A673 (cell line): ENCODE measurements at regions of chr13 and their contacts with region 1.

Region 1: DNA sequence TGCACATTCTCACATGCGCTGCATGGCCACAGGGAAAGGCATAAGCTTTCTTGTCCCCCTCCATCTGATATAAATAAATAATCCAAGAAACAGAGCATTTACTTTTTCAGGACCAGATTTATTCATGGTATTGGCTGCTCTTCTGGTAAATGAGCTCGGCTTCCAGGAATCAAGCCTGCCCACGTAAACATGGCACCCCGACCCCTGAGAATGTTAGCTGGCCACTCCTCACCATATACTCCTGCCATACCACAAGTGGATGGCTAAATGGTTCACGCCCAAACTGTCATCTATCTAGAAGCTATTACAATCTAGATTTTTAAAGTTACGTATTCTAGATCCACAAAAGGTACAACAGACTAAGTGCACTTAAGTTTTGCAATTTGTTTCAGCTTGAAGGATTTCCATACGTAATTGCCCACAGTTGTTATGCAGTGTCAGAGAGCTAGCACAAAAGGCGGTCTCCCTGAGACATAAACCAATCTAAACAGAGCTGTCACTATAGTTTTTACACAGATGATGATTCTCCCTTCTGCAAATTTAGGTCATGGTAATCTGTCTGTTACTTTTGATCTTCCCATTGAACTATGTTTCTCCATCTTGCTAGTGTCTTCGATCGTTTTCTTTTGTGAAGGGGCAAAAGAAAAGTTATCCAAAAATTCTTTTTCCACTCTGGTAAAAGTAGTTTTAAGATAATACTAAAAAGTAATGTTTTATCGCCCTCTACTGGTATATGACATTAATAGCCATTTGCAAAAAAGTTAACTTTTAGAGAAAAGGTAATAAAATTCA is 16.2 kb upstream of the FOXO1 start:
- DNase-seq: peak; percentile 69
- H3K4me3 ChIP-seq: no peak overlapping the region
- H3K27ac ChIP-seq: no peak overlapping the region
- H3K4me1 ChIP-seq: no peaks in the 10 kb centered on the region
- H3K27me3 ChIP-seq: no peaks in the 10 kb centered on the region
- CTCF ChIP-seq: peak; percentile 64

Region 2: DNA sequence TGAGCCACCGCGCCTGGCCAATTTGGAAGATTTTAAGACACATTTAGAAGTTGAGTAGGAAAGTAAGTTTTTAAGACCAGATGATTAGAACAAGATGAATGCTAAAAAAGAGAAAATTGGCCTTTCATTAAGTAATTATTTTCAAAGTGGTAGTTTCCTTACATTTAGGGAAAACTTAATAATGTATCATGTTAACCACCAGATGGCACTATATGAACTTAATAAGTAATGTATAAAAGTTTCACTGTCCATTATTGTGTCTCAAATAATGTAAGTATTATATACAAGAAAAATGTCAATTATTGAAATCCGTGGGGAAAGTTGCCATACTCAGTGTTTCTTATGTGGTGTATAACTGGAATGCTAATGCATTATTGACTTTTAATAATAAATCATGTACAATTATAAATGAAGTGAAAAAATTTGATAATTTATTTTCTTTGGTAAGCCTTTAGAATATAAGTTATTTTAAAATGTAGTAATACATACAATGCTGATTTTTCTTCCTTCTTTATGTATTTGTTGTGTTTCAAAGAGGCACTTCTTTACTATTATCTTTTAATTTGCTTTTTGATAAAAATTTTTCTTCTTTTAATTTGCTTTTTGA is 998.0 kb before region 1 on chr13:
- CTCF ChIA-PET with region 1: no interaction called
- POLR2A ChIA-PET with region 1: interaction called, 5 read pairs
- intact Hi-C with region 1: loop called (anchors 2 kb)
- DNase-seq: peak; percentile 73
- H3K4me3 ChIP-seq: no peak overlapping the region
- H3K27ac ChIP-seq: no peak overlapping the region
- H3K4me1 ChIP-seq: no peaks in the 10 kb centered on the region
- H3K27me3 ChIP-seq: no peaks in the 10 kb centered on the region
- CTCF ChIP-seq: peak; percentile 56

Region 3: GRCh38 chr13:39777527-39778061 is 905.1 kb before region 1 on chr13:
- CTCF ChIA-PET with region 1: no interaction called
- POLR2A ChIA-PET with region 1: no interaction called
- intact Hi-C with region 1: loop called (anchors 5 kb)
- DNase-seq: peak; percentile 68
- H3K4me3 ChIP-seq: no peak overlapping the region
- H3K27ac ChIP-seq: no peak overlapping the region
- H3K4me1 ChIP-seq: no peaks in the 10 kb centered on the region
- H3K27me3 ChIP-seq: no peaks in the 10 kb centered on the region
- CTCF ChIP-seq: peak; percentile 59

Region 4: DNA sequence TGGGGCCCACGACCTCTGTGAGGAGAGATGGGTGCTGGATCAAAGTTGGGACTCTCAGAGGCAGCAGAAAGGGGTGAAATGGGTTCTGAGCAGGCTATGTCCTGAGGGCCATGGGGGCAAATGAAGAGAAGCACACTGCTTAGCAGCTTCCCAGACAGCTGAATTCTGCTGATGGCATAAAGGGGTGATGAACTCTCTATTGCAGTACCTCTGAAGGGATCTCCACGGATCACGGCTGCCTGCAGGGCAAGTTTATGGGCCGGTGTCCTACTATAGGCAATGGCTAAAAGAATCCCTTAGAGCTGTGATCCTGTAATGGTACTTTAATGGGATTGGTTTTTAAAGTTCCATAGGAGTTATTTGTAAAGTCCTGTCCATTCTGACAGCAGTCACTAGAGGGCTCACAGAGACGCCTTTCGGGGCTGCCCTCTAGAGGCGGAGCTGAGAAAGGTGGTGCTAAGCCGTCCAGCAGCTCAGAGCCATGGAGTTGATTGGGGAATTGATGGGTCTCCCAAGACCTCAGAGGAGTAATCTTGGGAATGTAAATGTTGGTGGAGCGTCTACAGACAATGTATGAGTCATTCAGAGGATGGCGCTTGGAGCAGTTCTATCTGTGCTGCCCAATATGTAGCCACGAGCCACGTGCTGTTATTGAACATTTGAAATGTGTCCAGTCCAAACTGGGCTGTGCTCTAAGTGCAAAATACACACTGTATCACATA is 739.9 kb before region 1 on chr13:
- CTCF ChIA-PET with region 1: interaction called, 4 read pairs
- POLR2A ChIA-PET with region 1: no interaction called
- intact Hi-C with region 1: loop called (anchors 2 kb)
- DNase-seq: peak; percentile 90
- H3K4me3 ChIP-seq: no peak overlapping the region
- H3K27ac ChIP-seq: no peak overlapping the region
- H3K4me1 ChIP-seq: peaks cover 4% of the 10 kb centered on the region
- H3K27me3 ChIP-seq: no peaks in the 10 kb centered on the region
- CTCF ChIP-seq: peak; percentile 100

Region 5: DNA sequence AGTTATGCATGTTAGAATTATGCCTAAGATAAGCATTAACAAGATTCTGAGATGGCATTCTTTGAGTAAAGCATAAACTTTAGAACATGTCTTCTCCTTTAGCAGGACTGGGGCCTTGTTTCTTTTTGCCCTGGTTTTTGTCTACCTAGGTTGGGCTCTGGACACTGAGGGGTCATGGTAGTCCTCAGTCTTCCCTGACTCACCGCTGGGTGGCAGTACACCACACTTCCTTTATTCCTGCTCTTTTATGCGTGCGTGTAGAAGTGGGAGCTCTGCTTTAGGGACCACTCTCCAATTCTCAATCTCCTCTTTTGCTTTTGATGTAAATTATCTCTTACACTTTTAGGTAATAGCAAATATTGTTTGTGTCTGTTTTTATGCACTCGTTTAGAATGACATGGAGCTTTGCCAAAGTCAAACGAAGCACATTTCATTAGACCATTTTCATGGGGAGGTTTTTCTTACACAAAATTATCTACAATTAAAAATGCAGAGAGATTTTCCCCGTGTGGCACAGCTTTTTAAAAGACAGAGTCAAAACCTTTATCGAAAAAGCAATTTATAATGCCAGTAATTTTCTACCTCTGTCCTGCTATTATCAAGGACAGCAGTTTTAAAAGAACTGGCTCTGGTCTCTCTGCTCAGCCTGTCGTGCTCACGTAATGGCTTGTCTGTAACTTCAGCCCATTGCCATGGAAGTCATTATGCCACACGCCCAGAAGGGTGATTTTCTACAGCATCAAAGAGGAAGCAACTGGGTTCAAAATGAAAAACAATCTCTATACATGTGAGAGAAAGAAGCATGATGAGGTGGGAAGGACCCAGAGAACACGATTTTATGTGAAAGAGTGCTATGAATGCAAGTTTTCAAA is 613.2 kb before region 1 on chr13:
- CTCF ChIA-PET with region 1: interaction called, 3 read pairs
- POLR2A ChIA-PET with region 1: no interaction called
- intact Hi-C with region 1: loop called (anchors 2 kb)
- DNase-seq: peak; percentile 72
- H3K4me3 ChIP-seq: no peak overlapping the region
- H3K27ac ChIP-seq: no peak overlapping the region
- H3K4me1 ChIP-seq: peaks cover 10% of the 10 kb centered on the region
- H3K27me3 ChIP-seq: no peaks in the 10 kb centered on the region
- CTCF ChIP-seq: peak; percentile 83

Region 6: DNA sequence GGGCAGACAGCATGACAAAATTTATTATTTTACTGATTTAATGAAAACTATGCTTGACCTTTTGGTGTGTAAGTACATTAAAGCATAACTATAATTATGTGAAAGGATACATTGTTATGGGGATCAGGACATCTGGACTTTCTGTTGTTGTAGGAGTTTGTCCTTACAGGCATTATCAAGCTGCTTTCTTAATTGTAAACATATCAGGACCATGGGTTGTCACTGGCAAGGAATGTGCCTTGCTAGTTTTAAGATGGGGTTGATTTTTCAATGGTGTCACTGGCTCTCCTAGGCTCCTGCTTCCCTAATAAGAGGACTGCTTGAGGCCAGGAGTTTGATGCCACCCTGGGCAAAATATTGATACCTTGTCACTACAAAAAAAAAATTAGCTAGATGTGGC is 417.3 kb after region 1 on chr13:
- CTCF ChIA-PET with region 1: no interaction called
- POLR2A ChIA-PET with region 1: no interaction called
- intact Hi-C with region 1: no loop called
- DNase-seq: no peak
- H3K4me3 ChIP-seq: no peak overlapping the region
- H3K27ac ChIP-seq: no peak overlapping the region
- H3K4me1 ChIP-seq: no peaks in the 10 kb centered on the region
- H3K27me3 ChIP-seq: no peaks in the 10 kb centered on the region
- CTCF ChIP-seq: no peak